ENCODE measurements at regions of chr9 and their contacts with region 1.

Region 1: GRCh38 chr9:38408719-38409118 is 15.5 kb downstream of the IGFBPL1 start:
- DNase-seq: no peak

Region 2: GRCh38 chr9:38195737-38196161 is 213.0 kb before region 1 on chr9:
- in situ Hi-C with region 1: no loop called
- DNase-seq: no peak

Region 3: GRCh38 chr9:38358390-38359296 is 50.1 kb before region 1 on chr9:
- in situ Hi-C with region 1: loop called (anchors 10 kb)
- DNase-seq: no peak